ENCODE measurements at regions of chr11 and their contacts with region 1.

Region 1: DNA sequence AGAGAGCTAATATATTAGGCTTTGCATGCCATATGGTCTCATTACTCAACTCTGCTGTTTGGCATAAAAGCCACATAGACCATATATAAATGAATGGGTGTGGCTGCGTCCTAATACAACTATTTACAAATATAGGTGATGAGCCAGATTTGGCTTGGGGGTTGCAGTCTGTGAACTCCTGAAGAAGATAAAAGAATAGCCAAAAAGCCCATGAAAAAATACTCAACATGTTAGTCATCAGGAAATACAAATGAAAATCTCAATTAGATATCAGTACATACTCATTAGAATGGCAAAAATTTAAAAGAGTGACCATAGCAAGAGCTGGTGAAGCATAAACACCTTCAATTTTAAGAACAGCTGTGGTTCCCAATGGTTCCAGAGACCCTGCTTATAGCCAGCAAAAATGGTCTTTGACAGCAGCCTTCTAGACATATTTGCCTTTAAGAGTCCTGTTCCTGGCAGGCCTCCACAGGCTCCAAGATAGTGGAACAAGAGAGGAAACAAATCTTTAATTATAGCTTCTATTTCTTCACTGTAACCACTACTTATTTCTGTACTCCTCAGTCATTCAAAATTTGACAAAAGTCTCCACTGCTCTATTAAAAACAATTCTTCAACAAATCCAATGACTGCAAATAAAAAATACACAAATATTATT is 16.1 kb downstream of the C2CD3 start:
- DNase-seq: no peak
- H3K4me3 ChIP-seq: no peak overlapping the region
- H3K27ac ChIP-seq: no peak overlapping the region
- H3K27me3 ChIP-seq: no peaks in the 10 kb centered on the region
- CTCF ChIP-seq: no peak

Region 2: GRCh38 chr11:74069147-74070047 is 85.4 kb before region 1 on chr11:
- CTCF ChIA-PET with region 1: no interaction called
- POLR2A ChIA-PET with region 1: no interaction called
- DNase-seq: no peak
- H3K4me3 ChIP-seq: no peak overlapping the region
- H3K27ac ChIP-seq: no peak overlapping the region
- H3K27me3 ChIP-seq: no peaks in the 10 kb centered on the region
- CTCF ChIP-seq: no peak

Region 3: GRCh38 chr11:74195828-74196227 is 41.1 kb after region 1 on chr11:
- CTCF ChIA-PET with region 1: no interaction called
- POLR2A ChIA-PET with region 1: no interaction called
- DNase-seq: no peak
- H3K4me3 ChIP-seq: no peak overlapping the region
- H3K27ac ChIP-seq: no peak overlapping the region
- H3K27me3 ChIP-seq: no peaks in the 10 kb centered on the region
- CTCF ChIP-seq: no peak

Region 4: DNA sequence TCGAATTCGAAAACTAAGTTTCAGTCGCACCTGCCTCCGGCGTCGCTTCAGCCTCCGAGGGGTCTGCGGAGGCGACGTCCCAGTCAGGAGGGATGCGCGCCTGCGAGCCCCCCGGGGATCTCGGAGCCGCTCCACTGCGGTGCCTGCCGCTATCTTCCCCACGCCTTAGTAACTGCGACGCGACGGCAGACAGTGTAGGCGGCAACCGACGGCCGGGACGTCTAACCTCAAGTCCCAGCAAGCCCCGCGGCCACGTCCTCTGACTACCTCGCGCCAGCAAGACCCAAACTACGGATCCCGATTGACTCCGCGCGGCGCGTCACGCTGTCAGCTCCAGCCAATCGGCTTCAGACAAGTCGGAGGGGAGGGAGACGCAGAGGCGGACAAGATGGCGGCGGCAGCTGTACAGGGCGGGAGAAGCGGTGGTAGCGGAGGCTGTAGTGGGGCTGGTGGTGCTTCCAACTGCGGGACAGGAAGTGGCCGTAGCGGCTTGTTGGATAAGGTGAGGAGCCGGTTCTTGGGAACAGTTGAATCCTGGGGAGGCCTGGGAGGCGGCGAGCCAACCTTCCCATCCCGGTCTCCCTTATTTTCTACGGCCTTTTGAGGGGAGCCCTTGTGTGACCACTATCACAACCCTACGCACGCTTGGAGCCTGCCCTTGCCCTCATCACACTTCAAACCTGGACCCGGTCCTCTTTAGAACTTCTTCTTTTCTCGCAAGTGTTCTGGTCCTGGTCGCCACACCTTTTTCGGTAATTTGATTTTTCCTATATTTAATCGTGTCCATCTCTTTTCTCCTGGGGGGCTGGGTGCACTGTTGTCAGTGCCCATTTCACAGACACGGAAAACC is 794.4 kb after region 1 on chr11 and contains the starts of genes SPCS2 and XRRA1:
- CTCF ChIA-PET with region 1: no interaction called
- POLR2A ChIA-PET with region 1: interaction called, 12 read pairs
- DNase-seq: peak; percentile 97
- H3K4me3 ChIP-seq: peak within 1 kb of the TSS; percentile 95
- H3K27ac ChIP-seq: peak within 1 kb of the TSS; percentile 69
- H3K27me3 ChIP-seq: no peaks in the 10 kb centered on the region
- CTCF ChIP-seq: no peak
- polyA plus RNA-seq, gene SPCS2: 108 and 195 TPM in 2 replicates
- polyA plus RNA-seq, gene XRRA1: 5.6 and 7.0 TPM in 2 replicates

Measured in AG04450 (cell line).